ENCODE measurements at regions of chr17 and their contacts with region 1.

Region 1: GRCh38 chr17:77494664-77495435 is 354.1 kb downstream of the SEC14L1 start:
- DNase-seq: peak; percentile 74
- H3K27ac ChIP-seq: peak overlapping the region; percentile 68
- CTCF ChIP-seq: peak; percentile 97

Region 2: GRCh38 chr17:77331301-77331864 is 163.5 kb before region 1 on chr17:
- CTCF ChIA-PET with region 1: interaction called, 14 read pairs
- POLR2A ChIA-PET with region 1: no interaction called
- DNase-seq: peak; percentile 81
- H3K27ac ChIP-seq: peak overlapping the region; percentile 100
- CTCF ChIP-seq: peak; percentile 95